ENCODE measurements at regions of chr7 and their contacts with region 1.

Region 1: GRCh38 chr7:141636053-141636452 is 65.9 kb downstream of the DENND11 start:
- DNase-seq: no peak
- H3K4me3 ChIP-seq: no peak overlapping the region
- H3K27ac ChIP-seq: no peak overlapping the region
- H3K4me1 ChIP-seq: no peaks in the 10 kb centered on the region
- CTCF ChIP-seq: no peak

Region 2: GRCh38 chr7:141515941-141516340 is 120.1 kb before region 1 on chr7:
- CTCF ChIA-PET with region 1: no interaction called
- POLR2A ChIA-PET with region 1: no interaction called
- intact Hi-C with region 1: no loop called
- DNase-seq: no peak
- H3K4me3 ChIP-seq: no peak overlapping the region
- H3K27ac ChIP-seq: no peak overlapping the region
- H3K4me1 ChIP-seq: no peaks in the 10 kb centered on the region
- CTCF ChIP-seq: no peak

Region 3: GRCh38 chr7:141597966-141598365 is 38.1 kb before region 1 on chr7:
- CTCF ChIA-PET with region 1: no interaction called
- POLR2A ChIA-PET with region 1: interaction called, 3 read pairs
- intact Hi-C with region 1: loop called (anchors 5 kb)
- DNase-seq: no peak
- H3K4me3 ChIP-seq: no peak overlapping the region
- H3K27ac ChIP-seq: no peak overlapping the region
- H3K4me1 ChIP-seq: no peaks in the 10 kb centered on the region
- CTCF ChIP-seq: no peak

Region 4: DNA sequence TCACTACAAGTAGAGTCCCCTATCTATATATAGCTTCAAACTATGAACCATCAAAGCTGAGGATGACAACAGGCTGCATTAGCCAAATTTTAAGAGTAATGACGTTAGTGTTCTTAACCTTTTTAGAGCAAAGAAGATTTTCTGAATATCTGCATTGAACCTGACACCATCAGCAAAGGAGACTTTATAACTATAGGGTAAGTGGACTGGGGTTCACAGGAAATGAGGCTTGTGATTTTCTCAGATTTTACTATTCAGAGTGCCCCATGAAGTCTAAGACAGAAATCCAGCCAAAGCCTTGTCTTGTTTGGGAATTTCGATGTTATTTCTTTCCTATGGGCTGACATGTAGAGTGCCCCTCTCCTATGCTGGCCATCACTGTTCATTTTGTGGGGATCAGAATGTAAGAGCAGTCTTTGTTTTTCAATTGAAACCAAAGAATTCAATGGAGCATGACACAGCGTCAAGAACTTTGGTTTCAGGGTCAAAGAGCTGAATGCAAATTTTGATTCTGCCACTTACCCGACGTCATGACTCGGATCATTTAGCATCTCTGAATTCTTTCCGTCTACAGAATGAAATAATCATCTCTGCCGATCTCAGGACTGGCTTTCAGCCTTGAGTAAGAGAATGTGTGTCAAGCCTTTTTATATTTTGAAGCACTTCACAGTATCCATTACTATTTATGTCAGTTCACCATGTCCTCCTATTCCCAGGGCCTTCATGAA is 13.2 kb after region 1 on chr7:
- CTCF ChIA-PET with region 1: interaction called, 3 read pairs
- POLR2A ChIA-PET with region 1: interaction called, 10 read pairs
- intact Hi-C with region 1: no loop called
- DNase-seq: peak; percentile 18
- H3K4me3 ChIP-seq: no peak overlapping the region
- H3K27ac ChIP-seq: no peak overlapping the region
- H3K4me1 ChIP-seq: peaks cover 9% of the 10 kb centered on the region
- CTCF ChIP-seq: no peak

Measured in OCI-LY7 (cell line).